A673 (cell line): ENCODE measurements at regions of chrX and their contacts with region 1.

Region 1: DNA sequence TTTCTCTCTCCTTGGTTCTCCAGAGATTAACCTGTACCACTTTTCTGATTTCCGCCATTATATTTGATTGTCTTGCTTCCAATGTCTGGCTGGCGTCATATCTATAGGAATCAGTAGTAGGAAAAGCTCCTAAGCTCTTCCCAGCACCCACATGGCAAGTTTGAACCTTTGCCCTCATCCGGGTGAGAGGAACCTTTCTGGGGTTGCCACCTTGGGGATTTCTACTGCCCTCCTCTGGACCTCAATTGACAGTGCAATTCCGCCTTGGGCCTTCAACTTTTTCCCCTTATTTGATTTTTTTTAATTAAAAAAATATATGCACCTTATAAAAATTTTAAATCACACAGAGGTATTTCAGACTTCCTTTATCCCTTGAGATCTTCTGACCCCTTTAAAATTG is 2.0 kb upstream of the CXorf66 start:
- DNase-seq: peak; percentile 50
- H3K4me3 ChIP-seq: no peak overlapping the region
- H3K27ac ChIP-seq: no peak overlapping the region
- H3K4me1 ChIP-seq: peaks cover 27% of the 10 kb centered on the region
- H3K27me3 ChIP-seq: no peaks in the 10 kb centered on the region
- CTCF ChIP-seq: peak; percentile 49; the same call in 1 of the 2 replicates

Region 2: GRCh38 chrX:138756234-138756633 is 1211.1 kb before region 1 on chrX:
- CTCF ChIA-PET with region 1: no interaction called
- POLR2A ChIA-PET with region 1: no interaction called
- intact Hi-C with region 1: loop called (anchors 1 kb)
- DNase-seq: peak; percentile 76
- H3K4me3 ChIP-seq: no peak overlapping the region
- H3K27ac ChIP-seq: no peak overlapping the region
- H3K4me1 ChIP-seq: peaks cover 5% of the 10 kb centered on the region
- H3K27me3 ChIP-seq: no peaks in the 10 kb centered on the region
- CTCF ChIP-seq: peak; percentile 64

Region 3: GRCh38 chrX:138847928-138848327 is 1119.4 kb before region 1 on chrX:
- CTCF ChIA-PET with region 1: no interaction called
- POLR2A ChIA-PET with region 1: no interaction called
- intact Hi-C with region 1: loop called (anchors 2 kb)
- DNase-seq: peak; percentile 55
- H3K4me3 ChIP-seq: no peak overlapping the region
- H3K27ac ChIP-seq: no peak overlapping the region
- H3K4me1 ChIP-seq: peaks cover 43% of the 10 kb centered on the region
- H3K27me3 ChIP-seq: no peaks in the 10 kb centered on the region
- CTCF ChIP-seq: peak; percentile 58

Region 4: GRCh38 chrX:139077281-139078250 is 889.7 kb before region 1 on chrX:
- CTCF ChIA-PET with region 1: no interaction called
- POLR2A ChIA-PET with region 1: no interaction called
- intact Hi-C with region 1: loop called (anchors 5 kb)
- DNase-seq: peak; percentile 74
- H3K4me3 ChIP-seq: no peak overlapping the region
- H3K27ac ChIP-seq: peak overlapping the region; percentile 65
- H3K4me1 ChIP-seq: peaks cover 66% of the 10 kb centered on the region
- H3K27me3 ChIP-seq: no peaks in the 10 kb centered on the region
- CTCF ChIP-seq: no peak

Region 5: GRCh38 chrX:139566981-139567380 is 400.3 kb before region 1 on chrX:
- CTCF ChIA-PET with region 1: no interaction called
- POLR2A ChIA-PET with region 1: interaction called, 25 read pairs
- intact Hi-C with region 1: loop called (anchors 1 kb)
- DNase-seq: peak; percentile 76
- H3K4me3 ChIP-seq: no peak overlapping the region
- H3K27ac ChIP-seq: peak overlapping the region; percentile 78
- H3K4me1 ChIP-seq: peaks cover 5% of the 10 kb centered on the region
- H3K27me3 ChIP-seq: no peaks in the 10 kb centered on the region
- CTCF ChIP-seq: no peak

Region 6: DNA sequence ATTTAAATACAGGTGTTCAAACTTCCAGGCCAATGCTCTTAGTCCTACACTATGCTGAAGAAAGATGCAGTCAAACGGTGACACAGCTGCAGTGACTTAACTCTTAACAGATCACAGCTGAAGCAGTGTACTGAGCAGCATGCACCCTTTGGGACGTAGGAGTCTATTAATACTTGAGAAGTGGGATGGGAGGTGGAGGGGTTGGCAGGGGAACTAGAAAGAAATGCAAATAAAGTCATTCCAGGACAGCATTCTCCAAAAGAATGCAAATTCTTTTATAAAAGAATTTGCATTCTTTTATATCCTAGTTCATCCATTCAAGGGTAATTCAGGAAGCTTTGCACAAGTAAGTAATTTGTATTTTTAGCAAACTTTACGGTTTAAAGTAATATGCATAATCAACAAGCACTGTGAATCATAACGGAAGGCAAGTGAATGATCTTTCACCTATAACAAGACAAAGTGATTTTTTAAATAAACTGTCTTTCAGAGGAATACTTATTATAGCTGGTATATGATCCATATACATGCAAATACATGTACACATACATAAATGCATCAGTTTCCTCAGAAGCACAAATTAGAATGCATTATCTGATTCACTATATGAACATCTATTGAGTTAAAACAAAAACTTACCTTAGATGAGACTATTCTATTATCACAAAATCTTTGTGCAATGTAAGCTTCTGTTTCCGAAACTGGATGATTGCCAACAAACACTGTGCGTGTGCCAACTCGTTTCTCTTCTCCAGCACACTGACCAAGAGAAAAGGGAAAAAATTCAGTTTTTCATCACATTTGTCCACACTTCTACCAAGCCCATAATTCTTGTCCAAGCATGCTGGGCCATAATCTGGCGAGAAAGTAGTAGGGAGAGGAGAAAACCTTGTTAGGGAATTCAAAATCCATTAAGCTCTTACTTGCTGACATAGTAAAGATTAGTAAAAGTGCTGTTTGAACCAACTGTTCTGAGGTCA is 140.9 kb before region 1 on chrX:
- CTCF ChIA-PET with region 1: no interaction called
- POLR2A ChIA-PET with region 1: no interaction called
- intact Hi-C with region 1: loop called (anchors 1 kb)
- DNase-seq: peak; percentile 84
- H3K4me3 ChIP-seq: peak overlapping the region; percentile 8
- H3K27ac ChIP-seq: peak overlapping the region; percentile 71
- H3K4me1 ChIP-seq: peaks cover 70% of the 10 kb centered on the region
- H3K27me3 ChIP-seq: no peaks in the 10 kb centered on the region
- CTCF ChIP-seq: no peak

Region 7: DNA sequence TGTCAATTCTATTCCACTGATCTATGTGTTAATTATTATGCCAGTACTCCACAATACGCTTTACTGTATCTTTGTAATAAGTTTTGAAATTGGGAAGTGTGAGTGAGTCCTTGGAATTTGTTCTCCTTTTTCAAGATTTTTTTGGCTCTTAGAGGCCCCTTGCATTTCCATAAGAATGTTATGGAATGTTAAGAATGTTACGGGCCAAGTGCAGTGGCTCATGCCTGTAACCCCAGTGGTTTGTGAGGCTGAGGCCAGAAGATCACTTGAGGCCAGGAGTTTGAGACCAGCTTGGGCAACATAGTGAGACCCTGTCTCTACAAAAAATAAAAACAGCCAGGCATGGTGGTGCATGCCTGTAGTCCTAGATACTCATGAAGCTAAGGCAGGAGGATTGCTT is 165.6 kb after region 1 on chrX:
- CTCF ChIA-PET with region 1: no interaction called
- POLR2A ChIA-PET with region 1: no interaction called
- intact Hi-C with region 1: no loop called
- DNase-seq: no peak
- H3K4me3 ChIP-seq: no peak overlapping the region
- H3K27ac ChIP-seq: no peak overlapping the region
- H3K4me1 ChIP-seq: no peaks in the 10 kb centered on the region
- H3K27me3 ChIP-seq: no peaks in the 10 kb centered on the region
- CTCF ChIP-seq: no peak